ENCODE measurements at regions of chr15 and their contacts with region 1.

Region 1: DNA sequence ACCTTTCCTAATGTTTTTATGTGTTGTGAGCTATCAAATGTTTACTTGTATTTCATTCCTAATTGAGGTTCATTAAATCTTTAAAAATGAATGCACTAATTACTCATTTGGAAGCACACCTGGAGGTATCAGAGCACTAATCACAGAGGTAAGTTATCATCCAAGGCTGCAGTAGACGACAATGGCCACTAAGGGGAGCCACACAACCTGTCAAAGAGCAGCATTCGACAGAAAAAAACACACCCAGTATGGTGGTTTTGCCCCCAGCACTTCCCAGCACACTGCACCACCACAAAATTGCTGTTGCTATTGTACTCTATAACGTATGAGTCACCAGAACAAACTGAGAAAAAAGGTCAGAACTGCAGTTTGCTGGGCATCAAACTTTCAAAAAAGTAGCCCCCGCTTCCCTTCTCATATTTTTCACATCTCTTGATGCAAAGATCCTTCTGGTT is 205.9 kb upstream of the IGF1R start:
- DNase-seq: peak in 38 of 42 donors; percentile 22 to 84 (median 64)

Region 2: DNA sequence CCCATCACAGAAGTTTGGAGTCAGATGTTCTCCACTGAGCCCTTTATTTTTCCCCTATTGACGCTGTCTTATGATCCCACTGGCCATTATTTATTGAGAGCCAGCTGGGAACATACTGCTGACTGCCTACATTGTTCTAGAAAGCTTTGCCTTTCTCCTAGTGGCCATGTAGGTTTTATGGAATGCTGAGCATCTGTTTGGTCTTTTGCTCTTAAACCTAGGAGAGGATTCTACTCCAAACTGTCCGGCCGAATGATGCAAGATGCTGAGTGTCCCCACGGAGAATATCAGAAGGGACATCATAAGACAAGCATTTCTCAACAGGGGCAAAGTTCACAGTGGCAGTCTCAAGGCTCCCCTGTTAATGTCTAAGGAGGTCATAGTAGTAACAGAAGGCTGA is 310.5 kb before region 1 on chr15:
- intact Hi-C with region 1: no loop called
- DNase-seq: no peak

Region 3: GRCh38 chr15:98308117-98308516 is 134.3 kb before region 1 on chr15:
- intact Hi-C with region 1: no loop called
- DNase-seq: no peak

Region 4: GRCh38 chr15:99068186-99068585 is 625.8 kb after region 1 on chr15:
- intact Hi-C with region 1: loop called (anchors 10 kb)
- DNase-seq: no peak

Region 5: DNA sequence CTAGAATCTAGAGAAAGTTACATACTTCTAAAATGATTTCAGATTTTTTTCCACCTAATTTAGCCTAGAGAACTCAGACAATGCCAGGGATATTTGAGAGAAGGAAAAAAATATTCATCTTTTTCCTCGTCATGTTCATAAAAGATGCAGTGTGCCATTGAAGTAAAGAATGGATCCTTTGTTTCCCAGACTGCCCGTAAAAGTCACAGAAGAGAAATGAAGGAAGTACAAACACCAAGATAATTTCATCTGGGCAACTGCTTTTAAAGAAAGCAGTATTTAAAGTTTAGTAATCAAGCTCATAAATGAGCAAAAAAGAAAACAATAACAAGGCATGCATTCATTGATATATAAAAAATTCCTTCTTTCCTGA is 759.8 kb after region 1 on chr15:
- intact Hi-C with region 1: loop called (anchors 5 kb)
- DNase-seq: no peak